ENCODE measurements at regions of chr14 and their contacts with region 1.

Region 1: GRCh38 chr14:68137704-68138619 is 318.4 kb downstream of the RAD51B start:
- DNase-seq: no peak

Region 2: GRCh38 chr14:67943947-67944346 is 194.0 kb before region 1 on chr14:
- intact Hi-C with region 1: loop called in 1 of 2 experiments (anchors 10 kb)
- DNase-seq: no peak

Region 3: DNA sequence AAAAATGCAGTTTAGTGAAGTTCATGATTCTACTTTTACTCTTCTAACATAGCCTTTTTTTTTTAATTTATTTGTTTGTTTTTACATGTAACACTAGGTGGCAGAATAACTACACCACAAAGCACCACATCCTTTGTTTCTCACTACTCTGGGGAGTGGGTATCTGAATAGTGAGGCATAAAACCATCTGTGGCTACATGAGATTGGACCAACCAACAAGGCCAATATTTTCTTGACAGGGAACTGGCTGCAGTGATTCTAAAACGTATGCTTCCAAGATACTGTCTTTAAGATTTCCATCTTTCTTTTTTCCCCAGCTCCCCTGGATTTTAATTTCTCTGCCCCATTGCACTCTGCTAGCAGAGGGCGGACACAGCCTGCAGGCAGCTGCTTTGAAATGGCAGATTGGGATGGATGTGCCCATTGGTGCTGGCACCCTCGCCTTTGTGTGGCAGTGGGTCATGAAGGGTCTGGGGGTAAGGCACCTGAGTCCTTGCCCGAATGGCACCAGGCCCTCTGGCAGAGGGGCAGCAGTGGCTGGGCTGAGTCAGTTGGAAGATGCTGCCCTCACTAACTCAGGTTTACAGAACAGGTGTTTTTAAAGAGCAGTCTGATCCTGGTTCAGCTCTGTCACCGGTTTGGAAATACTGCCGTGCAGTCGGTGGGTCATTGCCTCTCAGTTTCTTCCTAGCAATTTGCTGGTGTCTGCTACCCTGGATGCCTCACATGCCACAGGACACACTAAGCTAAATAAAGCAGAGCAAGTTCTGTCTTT is 110.7 kb after region 1 on chr14:
- intact Hi-C with region 1: loop called in 1 of 2 experiments (anchors 10 kb)
- DNase-seq: no peak

Region 4: DNA sequence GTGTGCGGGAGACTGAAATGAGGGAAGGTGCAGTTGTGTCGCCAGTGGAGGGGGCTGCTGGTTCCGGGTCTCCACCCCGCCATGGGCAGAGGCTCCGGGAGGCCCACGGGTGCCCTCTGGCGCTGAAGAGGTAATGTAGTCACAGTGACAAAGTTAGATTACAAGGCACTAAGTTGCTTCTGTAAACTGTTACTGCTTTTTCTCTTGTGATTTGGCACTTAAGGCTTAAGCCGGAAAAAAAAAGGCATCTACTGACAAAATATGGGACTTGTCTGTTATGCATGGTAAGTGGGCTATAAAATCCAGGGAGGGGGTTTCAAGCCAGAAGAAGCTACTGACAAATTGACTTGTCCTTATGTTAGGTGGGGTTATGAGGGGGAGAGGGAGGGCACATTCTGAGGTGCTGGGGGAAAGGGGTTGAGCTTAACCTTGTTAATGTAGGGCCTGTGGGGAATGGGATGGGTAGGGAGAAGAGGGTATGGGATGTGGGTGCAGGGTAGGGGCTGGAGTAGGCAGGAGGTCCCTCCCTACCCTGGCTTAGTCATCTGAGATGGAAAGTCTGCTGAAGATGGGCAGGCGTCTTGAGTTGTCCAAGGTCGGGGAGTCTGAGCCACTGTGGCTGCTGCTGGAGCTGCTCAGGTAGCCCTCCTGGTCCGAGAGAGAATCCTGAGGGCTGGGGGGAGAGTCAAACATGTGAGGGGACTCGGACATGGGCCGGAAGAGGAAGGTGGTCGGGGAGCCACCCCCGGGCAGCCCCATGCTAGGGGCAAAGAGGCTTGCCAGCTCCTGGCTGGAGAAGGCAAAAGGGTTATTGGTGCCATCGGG is 651.2 kb after region 1 on chr14:
- intact Hi-C with region 1: loop called in 1 of 2 experiments (anchors 10 kb)
- DNase-seq: peak; percentile 93

Measured in posterior vena cava (tissue), 2 donors.